Activated naive CD4-positive, alpha-beta T cell treated with anti-CD3 and anti-CD28 coated beads for 36 hours (primary cell): ENCODE measurements at regions of chr20 and their contacts with region 1.

Region 1: GRCh38 chr20:37990571-37991151 is 42.6 kb downstream of the TTI1 start:
- DNase-seq: peak; percentile 54
- H3K4me3 Mint-ChIP-seq: no peak overlapping the region
- H3K27ac Mint-ChIP-seq: no peak overlapping the region
- H3K4me1 Mint-ChIP-seq: peaks cover 13% of the 10 kb centered on the region
- H3K27me3 Mint-ChIP-seq: no peaks in the 10 kb centered on the region

Region 2: DNA sequence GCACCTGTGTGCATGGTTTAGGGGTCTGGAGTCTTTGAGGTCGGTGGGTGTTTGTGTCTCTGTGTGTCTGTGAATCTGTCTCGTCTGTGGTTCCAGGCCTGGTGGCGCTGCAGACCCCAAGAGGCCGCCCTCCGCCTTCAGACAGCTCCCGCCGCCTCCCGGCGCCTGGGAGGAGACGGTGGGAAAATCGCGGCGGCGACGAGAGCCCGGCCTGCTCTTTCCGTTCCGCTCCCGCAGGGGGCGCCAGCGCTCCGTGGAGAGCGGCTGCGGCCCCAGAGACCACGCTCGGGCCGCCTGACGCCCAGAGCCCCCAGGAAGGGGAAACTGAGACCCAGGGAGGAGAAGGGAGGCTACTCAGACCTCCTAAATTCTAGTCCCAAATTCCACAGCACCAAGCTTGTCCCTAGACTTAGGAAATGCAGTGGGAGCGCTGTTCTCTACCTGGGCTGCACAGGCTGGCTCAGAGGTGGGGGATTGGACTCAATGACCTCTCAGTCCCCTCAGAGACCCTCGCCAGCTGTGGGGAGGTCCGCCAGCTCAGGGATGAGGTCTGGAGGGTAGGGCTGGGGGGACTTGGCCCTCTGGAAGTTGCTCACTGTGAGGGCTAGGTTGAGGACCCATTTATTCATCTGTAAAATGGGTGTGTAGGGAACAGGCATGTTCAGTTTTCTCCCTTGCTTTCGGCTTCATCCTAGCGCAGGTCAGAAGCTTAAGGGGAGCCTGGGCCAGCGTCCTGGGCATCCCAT is 426.1 kb before region 1 on chr20:
- CTCF ChIA-PET with region 1: no interaction called
- intact Hi-C with region 1: loop called (anchors 1 kb)
- DNase-seq: peak; percentile 39
- H3K4me3 Mint-ChIP-seq: no peak overlapping the region
- H3K27ac Mint-ChIP-seq: no peak overlapping the region
- H3K4me1 Mint-ChIP-seq: peaks cover 2% of the 10 kb centered on the region
- H3K27me3 Mint-ChIP-seq: peaks cover 37% of the 10 kb centered on the region

Region 3: GRCh38 chr20:37651932-37652331 is 338.7 kb before region 1 on chr20:
- CTCF ChIA-PET with region 1: no interaction called
- intact Hi-C with region 1: loop called (anchors 1 kb)
- DNase-seq: peak; percentile 48
- H3K4me3 Mint-ChIP-seq: no peak overlapping the region
- H3K27ac Mint-ChIP-seq: no peak overlapping the region
- H3K4me1 Mint-ChIP-seq: no peaks in the 10 kb centered on the region
- H3K27me3 Mint-ChIP-seq: peaks cover 22% of the 10 kb centered on the region

Region 4: GRCh38 chr20:37901654-37902503 is 88.8 kb before region 1 on chr20:
- CTCF ChIA-PET with region 1: no interaction called
- intact Hi-C with region 1: loop called (anchors 5 kb)
- DNase-seq: peak; percentile 61
- H3K4me3 Mint-ChIP-seq: peak overlapping the region; percentile 26
- H3K27ac Mint-ChIP-seq: no peak overlapping the region
- H3K4me1 Mint-ChIP-seq: peaks cover 13% of the 10 kb centered on the region
- H3K27me3 Mint-ChIP-seq: peaks cover 62% of the 10 kb centered on the region